Right ventricle myocardium superior (tissue), 1 donor: ENCODE measurements at regions of chr13 and their contacts with region 1.

Region 1: DNA sequence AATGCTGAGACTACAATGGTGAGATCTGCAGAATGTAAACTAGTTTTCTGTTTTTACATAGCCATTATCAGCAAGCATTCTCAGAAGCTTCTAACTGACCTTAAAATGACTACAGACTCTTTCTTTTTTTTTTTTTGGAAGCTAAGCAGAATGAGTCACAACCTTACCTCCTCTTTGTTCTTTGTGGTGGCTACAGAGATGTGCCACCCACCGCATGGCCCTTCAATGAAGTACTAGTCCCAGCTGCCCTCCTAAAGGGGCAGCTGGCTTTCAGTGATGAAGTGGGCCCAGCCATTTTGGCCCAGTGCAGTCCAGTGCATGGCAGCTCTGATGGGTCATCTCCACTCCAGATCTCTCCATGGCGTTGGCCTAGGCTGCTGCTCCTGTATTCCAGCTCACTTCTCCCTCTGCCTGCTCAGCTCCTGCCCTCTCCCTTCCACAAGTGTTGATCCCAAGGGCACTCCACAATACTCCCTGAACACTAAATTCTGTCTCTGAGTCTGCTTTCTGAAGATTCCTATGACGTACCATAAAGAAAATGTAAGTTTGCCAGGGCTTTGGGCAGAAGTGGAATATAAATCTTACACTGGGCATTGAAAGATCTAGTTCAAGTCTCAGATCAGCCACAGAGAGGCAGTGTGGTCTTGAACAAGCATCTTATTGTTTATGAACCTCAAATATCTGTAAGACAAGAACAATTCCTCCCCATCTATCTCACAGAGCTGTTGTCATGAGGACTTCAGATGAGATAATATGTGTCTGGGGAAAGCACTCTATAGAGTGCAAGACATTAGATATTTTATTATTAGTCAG is 85.6 kb downstream of the RXFP2 start:
- DNase-seq: no peak
- ATAC-seq: peak; percentile 78

Region 2: GRCh38 chr13:32315238-32316027 is 490.5 kb after region 1 on chr13 and contains the starts of genes BRCA2 and ZAR1L:
- intact Hi-C with region 1: loop called (anchors 10 kb)
- DNase-seq: peak; percentile 96
- ATAC-seq: peak; percentile 99
- total RNA-seq, gene BRCA2: 0.43 TPM
- total RNA-seq, gene ZAR1L: not detected